ENCODE measurements at regions of chr20 and their contacts with region 1.

Region 1: GRCh38 chr20:53949319-53949889 is 121.0 kb downstream of the BCAS1 start:
- DNase-seq: peak; percentile 91
- H3K4me3 Mint-ChIP-seq: peak overlapping the region; percentile 61
- H3K27ac Mint-ChIP-seq: peak overlapping the region; percentile 89
- H3K4me1 Mint-ChIP-seq: peaks cover 29% of the 10 kb centered on the region
- H3K27me3 Mint-ChIP-seq: no peaks in the 10 kb centered on the region

Region 2: GRCh38 chr20:53926428-53927028 is 22.9 kb before region 1 on chr20:
- CTCF ChIA-PET with region 1: no interaction called
- intact Hi-C with region 1: loop called (anchors 1 kb)
- DNase-seq: peak; percentile 66
- H3K4me3 Mint-ChIP-seq: no peak overlapping the region
- H3K27ac Mint-ChIP-seq: peak overlapping the region; percentile 36
- H3K4me1 Mint-ChIP-seq: peaks cover 34% of the 10 kb centered on the region
- H3K27me3 Mint-ChIP-seq: no peaks in the 10 kb centered on the region

Region 3: GRCh38 chr20:53934421-53935343 is 14.7 kb before region 1 on chr20:
- CTCF ChIA-PET with region 1: interaction called, 12 read pairs
- intact Hi-C with region 1: loop called (anchors 1 kb)
- DNase-seq: peak; percentile 42
- H3K4me3 Mint-ChIP-seq: no peak overlapping the region
- H3K27ac Mint-ChIP-seq: peak overlapping the region; percentile 42
- H3K4me1 Mint-ChIP-seq: peaks cover 43% of the 10 kb centered on the region
- H3K27me3 Mint-ChIP-seq: no peaks in the 10 kb centered on the region

Region 4: GRCh38 chr20:54062812-54063280 is 113.4 kb after region 1 on chr20:
- CTCF ChIA-PET with region 1: interaction called, 5 read pairs
- intact Hi-C with region 1: loop called (anchors 2 kb)
- DNase-seq: no peak
- H3K4me3 Mint-ChIP-seq: no peak overlapping the region
- H3K27ac Mint-ChIP-seq: no peak overlapping the region
- H3K4me1 Mint-ChIP-seq: peaks cover 8% of the 10 kb centered on the region
- H3K27me3 Mint-ChIP-seq: no peaks in the 10 kb centered on the region

Measured in activated naive CD4-positive, alpha-beta T cell treated with anti-CD3 and anti-CD28 coated beads for 36 hours (primary cell).